Activated CD4-positive, alpha-beta T cell treated with anti-CD3 and anti-CD28 coated beads, Interleukin-2, amount 10 ng/mL, durations not matched to agents 24 days and 14 days (primary cell): ENCODE measurements at regions of chr5 and their contacts with region 1.

Region 1: DNA sequence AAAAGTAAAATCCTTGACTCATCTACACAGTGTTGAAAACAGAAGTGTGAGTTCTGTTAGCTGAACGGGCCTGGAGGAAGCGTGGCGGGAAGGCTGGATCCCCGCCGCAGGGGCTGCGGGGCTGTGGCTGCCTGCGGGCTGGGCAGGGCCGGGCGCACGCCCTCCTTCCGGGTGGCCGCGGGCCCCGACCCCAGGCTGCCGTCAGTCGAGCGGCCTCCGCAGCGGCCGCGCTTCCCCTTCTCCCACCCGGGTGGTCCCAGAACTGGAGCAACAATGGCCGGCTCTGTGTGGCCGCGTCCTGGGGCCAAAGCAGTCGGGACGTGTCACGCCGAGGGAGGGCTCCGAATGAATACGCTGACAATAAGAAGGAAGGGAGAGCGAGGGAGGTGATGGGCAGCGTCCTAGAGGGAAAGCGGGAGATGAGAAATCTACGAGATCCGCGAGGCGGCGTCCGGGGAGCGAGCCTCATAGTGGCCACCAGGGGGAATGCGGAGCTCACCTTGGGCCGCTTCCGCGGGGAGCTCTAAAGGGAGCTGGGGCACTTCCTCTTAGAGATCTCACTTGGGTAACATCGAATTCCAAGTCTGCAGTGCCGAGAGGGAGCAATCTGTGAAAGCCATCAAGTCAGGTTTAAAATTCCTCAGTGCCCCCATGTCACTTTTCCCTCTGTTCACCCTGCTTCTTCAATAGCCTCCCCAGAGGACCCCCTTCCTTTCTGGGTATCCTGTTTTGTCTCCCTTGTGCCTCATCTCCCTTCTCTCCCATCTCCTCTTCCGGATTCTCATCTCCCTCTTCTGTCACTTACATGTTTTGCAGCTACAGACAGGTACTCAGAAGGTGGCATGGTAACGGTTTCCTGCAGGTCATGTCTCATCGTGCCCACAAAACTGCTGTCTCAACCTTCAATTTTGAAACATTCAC is 83.9 kb downstream of the SLC1A3 start:
- DNase-seq: peak; percentile 87
- H3K4me3 Mint-ChIP-seq: peak overlapping the region; percentile 87
- H3K27ac Mint-ChIP-seq: peak overlapping the region; percentile 56
- H3K4me1 Mint-ChIP-seq: peaks cover 11% of the 10 kb centered on the region
- H3K27me3 Mint-ChIP-seq: peaks cover 31% of the 10 kb centered on the region

Region 2: GRCh38 chr5:36414869-36415282 is 275.4 kb before region 1 on chr5:
- intact Hi-C with region 1: loop called (anchors 5 kb)
- DNase-seq: no peak
- H3K4me3 Mint-ChIP-seq: no peak overlapping the region
- H3K27ac Mint-ChIP-seq: no peak overlapping the region
- H3K4me1 Mint-ChIP-seq: peaks cover 5% of the 10 kb centered on the region
- H3K27me3 Mint-ChIP-seq: peaks cover 6% of the 10 kb centered on the region

Region 3: GRCh38 chr5:36507332-36507952 is 182.9 kb before region 1 on chr5:
- intact Hi-C with region 1: loop called (anchors 5 kb)
- DNase-seq: peak; percentile 91
- H3K4me3 Mint-ChIP-seq: no peak overlapping the region
- H3K27ac Mint-ChIP-seq: no peak overlapping the region
- H3K4me1 Mint-ChIP-seq: peaks cover 2% of the 10 kb centered on the region
- H3K27me3 Mint-ChIP-seq: peaks cover 10% of the 10 kb centered on the region

Region 4: DNA sequence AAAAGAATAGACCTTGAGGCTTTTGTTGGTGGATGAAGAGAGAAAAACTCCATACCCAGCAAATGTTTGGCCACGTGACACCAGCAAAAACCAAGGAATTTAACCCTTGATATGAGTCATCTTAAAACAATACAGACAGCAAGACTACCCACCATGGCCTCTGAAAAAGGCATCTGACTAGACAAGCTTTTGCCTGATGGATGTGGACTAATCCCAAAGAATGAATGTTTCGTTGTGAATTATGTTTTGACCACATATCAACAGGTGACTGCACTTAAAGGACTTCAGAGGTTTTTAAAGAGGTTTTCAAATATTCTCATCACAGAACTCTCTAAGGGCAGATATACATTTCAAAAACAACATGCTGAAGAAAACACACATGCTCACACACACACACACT is 116.9 kb before region 1 on chr5:
- intact Hi-C with region 1: no loop called
- DNase-seq: no peak
- H3K4me3 Mint-ChIP-seq: no peak overlapping the region
- H3K27ac Mint-ChIP-seq: no peak overlapping the region
- H3K4me1 Mint-ChIP-seq: no peaks in the 10 kb centered on the region
- H3K27me3 Mint-ChIP-seq: peaks cover 2% of the 10 kb centered on the region

Region 5: DNA sequence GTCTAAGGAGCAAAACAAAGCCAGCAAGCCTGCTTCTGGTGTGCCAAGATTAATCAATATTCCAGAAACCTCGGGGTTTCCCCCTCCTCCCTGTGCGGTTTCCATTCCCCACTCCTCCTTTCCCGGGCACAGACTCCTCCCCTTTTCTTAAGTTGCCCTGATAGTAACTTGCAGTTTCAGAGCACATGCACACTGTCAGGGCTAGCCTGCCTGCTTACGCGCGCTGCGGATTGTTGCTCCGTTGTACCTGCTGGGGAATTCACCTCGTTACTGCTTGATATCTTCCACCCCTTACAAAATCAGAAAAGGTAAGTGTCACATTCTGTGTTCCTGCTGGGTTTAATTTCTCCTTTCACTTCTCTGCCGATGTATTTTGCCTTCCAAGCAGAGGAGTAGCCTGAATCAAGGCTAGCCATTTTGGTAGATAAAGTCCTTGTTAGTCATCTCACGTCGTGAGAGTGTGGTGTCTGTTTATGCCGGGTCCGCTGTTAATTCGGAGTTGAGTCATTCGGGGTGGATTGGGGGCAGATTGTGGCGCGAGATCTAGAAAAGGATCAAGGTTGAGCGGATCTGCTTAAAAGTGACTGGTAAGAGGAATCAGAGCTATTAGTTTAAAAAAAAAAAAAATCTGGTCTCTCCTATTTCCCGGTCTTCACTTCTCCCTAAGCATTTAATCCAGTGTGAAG is 83.7 kb before region 1 on chr5 and contains the start of gene SLC1A3:
- intact Hi-C with region 1: loop called (anchors 5 kb)
- DNase-seq: peak; percentile 73
- H3K4me3 Mint-ChIP-seq: peak within 1 kb of the TSS; percentile 83
- H3K27ac Mint-ChIP-seq: peak within 1 kb of the TSS; percentile 81
- H3K4me1 Mint-ChIP-seq: peaks cover 16% of the 10 kb centered on the region
- H3K27me3 Mint-ChIP-seq: peaks cover 59% of the 10 kb centered on the region
- total RNA-seq, gene SLC1A3: not detected in 2 replicates

Region 6: GRCh38 chr5:36662291-36662851 is 27.9 kb before region 1 on chr5:
- intact Hi-C with region 1: no loop called
- DNase-seq: no peak
- H3K4me3 Mint-ChIP-seq: no peak overlapping the region
- H3K27ac Mint-ChIP-seq: no peak overlapping the region
- H3K4me1 Mint-ChIP-seq: no peaks in the 10 kb centered on the region
- H3K27me3 Mint-ChIP-seq: peaks cover 16% of the 10 kb centered on the region

Region 7: DNA sequence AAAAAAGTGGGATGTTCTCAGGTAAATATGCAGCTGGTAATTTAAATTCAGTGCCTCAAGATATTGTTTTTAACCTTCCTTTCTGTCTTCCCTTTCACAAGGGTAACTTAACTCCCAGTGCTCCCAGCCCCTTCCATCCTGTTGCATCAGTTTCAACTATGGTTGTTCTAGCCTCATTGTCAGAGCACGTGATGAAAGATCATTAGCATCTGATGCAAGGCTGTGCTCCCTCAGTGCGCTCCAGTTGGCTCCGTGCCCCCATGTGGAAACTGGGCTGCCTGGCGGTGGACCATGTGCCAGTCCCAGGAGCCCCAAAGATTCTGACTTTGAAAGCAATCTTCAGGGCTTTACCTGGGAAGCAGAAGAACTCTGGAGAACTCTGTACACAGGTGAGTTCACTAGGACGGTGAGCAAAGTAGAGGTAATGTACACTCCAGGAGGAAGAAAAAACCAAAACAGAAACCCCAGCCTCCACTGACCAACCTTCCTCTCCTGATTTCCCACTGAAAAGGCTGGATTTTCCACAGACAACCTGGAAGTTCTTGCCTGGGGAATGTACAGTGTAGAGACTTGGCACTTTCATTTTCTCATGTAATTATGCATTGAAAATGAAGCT is 13.1 kb after region 1 on chr5:
- intact Hi-C with region 1: no loop called
- DNase-seq: no peak
- H3K4me3 Mint-ChIP-seq: no peak overlapping the region
- H3K27ac Mint-ChIP-seq: no peak overlapping the region
- H3K4me1 Mint-ChIP-seq: no peaks in the 10 kb centered on the region
- H3K27me3 Mint-ChIP-seq: no peaks in the 10 kb centered on the region